ENCODE measurements at regions of chr17 and their contacts with region 1.

Region 1: GRCh38 chr17:47698749-47699535 is 5.0 kb downstream of the TBKBP1 start:
- DNase-seq: peak; percentile 89
- ATAC-seq: peak; percentile 32
- H3K4me3 Mint-ChIP-seq: no peak overlapping the region
- H3K27ac Mint-ChIP-seq: peak overlapping the region; percentile 31
- H3K4me1 Mint-ChIP-seq: peaks cover 49% of the 10 kb centered on the region
- H3K27me3 Mint-ChIP-seq: peaks cover 4% of the 10 kb centered on the region

Region 2: DNA sequence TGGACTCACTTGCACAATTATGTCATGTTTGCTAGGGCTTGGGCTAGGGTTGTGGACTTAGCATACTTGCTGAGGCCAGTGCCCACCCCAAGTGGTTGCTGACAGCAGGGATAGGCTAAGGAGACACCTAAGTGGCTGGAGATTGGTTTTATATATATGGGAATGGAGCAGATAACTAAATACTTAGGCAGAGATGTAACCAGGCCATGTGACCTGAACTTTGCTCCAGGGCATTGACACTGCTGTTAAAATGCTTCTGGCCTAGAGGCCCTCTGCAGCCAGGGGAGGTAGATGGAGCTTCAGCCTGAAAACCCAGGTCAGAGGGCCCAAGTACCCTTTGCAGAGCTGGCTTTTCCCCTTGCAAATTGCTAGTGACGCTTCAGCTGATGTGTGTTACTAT is 446.7 kb before region 1 on chr17:
- CTCF ChIA-PET with region 1: no interaction called
- DNase-seq: no peak
- ATAC-seq: no peak
- H3K4me3 Mint-ChIP-seq: no peak overlapping the region
- H3K27ac Mint-ChIP-seq: no peak overlapping the region
- H3K4me1 Mint-ChIP-seq: peaks cover 18% of the 10 kb centered on the region
- H3K27me3 Mint-ChIP-seq: peaks cover 63% of the 10 kb centered on the region

Region 3: GRCh38 chr17:47687748-47688147 is 11.2 kb before region 1 on chr17:
- CTCF ChIA-PET with region 1: interaction called, 10 read pairs
- DNase-seq: no peak
- ATAC-seq: no peak
- H3K4me3 Mint-ChIP-seq: no peak overlapping the region
- H3K27ac Mint-ChIP-seq: no peak overlapping the region
- H3K4me1 Mint-ChIP-seq: peaks cover 21% of the 10 kb centered on the region
- H3K27me3 Mint-ChIP-seq: peaks cover 3% of the 10 kb centered on the region

Region 4: GRCh38 chr17:47733047-47733673 is 34.2 kb after region 1 on chr17 and contains the start of gene TBX21:
- CTCF ChIA-PET with region 1: interaction called, 263 read pairs
- DNase-seq: peak; percentile 97
- ATAC-seq: peak; percentile 82
- H3K4me3 Mint-ChIP-seq: peak within 1 kb of the TSS; percentile 93
- H3K27ac Mint-ChIP-seq: peak within 1 kb of the TSS; percentile 99
- H3K4me1 Mint-ChIP-seq: peaks cover 67% of the 10 kb centered on the region
- H3K27me3 Mint-ChIP-seq: no peaks in the 10 kb centered on the region
- total RNA-seq, gene TBX21: 59.0 to 68.4 TPM

Region 5: DNA sequence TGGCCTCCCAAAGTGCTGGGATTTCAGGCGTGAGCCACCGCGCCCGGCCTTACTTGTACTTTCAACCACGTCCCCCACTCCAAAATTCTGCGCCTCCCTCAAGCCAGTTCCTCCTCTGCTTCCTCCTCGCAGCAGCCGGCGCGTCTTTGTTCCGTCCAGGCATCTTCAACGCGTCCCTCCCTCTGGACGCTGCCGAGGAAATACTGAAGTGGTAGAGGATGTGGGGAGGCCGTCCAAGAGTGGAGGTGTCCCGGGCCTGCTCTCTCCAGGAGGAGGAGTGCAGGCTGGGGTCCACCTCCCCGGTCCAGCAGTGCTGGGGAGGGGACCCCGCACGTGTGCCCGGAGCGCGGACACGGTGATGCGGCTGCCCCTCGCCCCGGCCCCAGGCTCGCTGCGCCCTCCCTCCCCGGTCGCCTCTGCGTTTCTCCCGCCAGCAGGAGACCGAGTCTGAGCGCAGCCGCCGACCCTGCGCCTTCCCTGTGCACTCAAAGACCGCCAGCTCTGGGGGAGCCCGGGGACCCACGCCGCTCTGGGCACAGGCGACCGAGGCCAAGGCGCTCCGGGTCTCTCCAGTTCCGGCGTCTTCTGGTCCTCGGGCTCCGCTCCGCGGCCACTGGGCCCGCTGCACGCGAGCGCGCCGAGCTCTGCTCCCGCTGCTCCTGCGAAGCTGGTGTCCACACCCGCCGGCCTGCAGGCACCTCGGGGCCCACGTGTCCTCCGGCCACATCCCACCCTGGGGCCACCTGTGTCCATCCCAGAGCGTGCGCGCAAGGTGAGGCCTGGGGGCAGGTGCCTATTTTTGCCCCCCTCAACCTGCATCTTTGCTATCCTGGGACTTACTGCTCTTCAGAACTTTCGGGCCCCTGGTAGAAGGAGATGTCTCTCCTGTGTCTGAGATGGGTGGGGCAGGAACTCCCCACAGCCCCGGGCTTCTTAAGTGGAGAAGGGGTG is 90.9 kb after region 1 on chr17:
- CTCF ChIA-PET with region 1: interaction called, 22 read pairs
- DNase-seq: peak; percentile 75
- ATAC-seq: peak; percentile 97
- H3K4me3 Mint-ChIP-seq: peak overlapping the region; percentile 59
- H3K27ac Mint-ChIP-seq: no peak overlapping the region
- H3K4me1 Mint-ChIP-seq: peaks cover 10% of the 10 kb centered on the region
- H3K27me3 Mint-ChIP-seq: peaks cover 77% of the 10 kb centered on the region